Activated CD8-positive, alpha-beta T cell treated with anti-CD3 and anti-CD28 coated beads for 36 hours (primary cell): ENCODE measurements at regions of chr6 and their contacts with region 1.

Region 1: GRCh38 chr6:96923871-96924493 is 546 bp upstream of the KLHL32 start:
- DNase-seq: no peak
- ATAC-seq: peak; percentile 22
- H3K4me3 Mint-ChIP-seq: peak overlapping the region; percentile 85
- H3K27ac Mint-ChIP-seq: peak overlapping the region; percentile 85
- H3K4me1 Mint-ChIP-seq: peaks cover 33% of the 10 kb centered on the region
- H3K27me3 Mint-ChIP-seq: no peaks in the 10 kb centered on the region
- CTCF ChIP-seq: no peak

Region 2: DNA sequence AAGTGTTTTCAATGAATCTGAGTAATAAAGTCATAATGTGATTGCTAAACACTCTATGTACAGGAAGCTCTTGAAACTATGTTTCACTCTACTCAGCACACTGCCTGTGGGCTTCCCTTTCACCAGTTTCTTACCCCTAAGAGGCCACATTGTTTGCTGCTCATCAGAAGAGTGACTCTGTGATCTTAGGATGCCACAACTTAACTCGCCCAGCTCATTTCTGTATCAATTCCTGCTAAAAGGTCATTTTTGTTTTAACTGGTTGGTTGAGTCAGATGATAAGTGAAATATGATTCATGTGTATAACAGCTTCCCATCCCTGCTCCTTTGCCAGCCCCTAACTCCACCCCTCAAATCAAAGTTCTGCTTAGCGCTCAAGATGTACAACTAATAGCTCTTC is 16.5 kb before region 1 on chr6:
- CTCF ChIA-PET with region 1: interaction called, 12 read pairs
- POLR2A ChIA-PET with region 1: interaction called, 9 read pairs
- intact Hi-C with region 1: no loop called
- DNase-seq: peak; percentile 79
- ATAC-seq: peak; percentile 99
- H3K4me3 Mint-ChIP-seq: no peak overlapping the region
- H3K27ac Mint-ChIP-seq: peak overlapping the region; percentile 60
- H3K4me1 Mint-ChIP-seq: peaks cover 22% of the 10 kb centered on the region
- H3K27me3 Mint-ChIP-seq: peaks cover 22% of the 10 kb centered on the region
- CTCF ChIP-seq: no peak